Naive thymus-derived CD4-positive, alpha-beta T cell (primary cell): ENCODE measurements at regions of chr6 and their contacts with region 1.

Region 1: GRCh38 chr6:27871924-27872638 is 40.1 kb downstream of the OR2B2 start:
- DNase-seq: peak; percentile 68 to 97 (median 94)
- ATAC-seq: peak; percentile 88
- H3K4me3 ChIP-seq: peak overlapping the region; percentile 69
- H3K4me3 Mint-ChIP-seq: peak overlapping the region; percentile 83 to 99 (median 94)
- H3K27ac ChIP-seq: peak overlapping the region; percentile 84
- H3K27ac Mint-ChIP-seq: peak overlapping the region; percentile 95 to 98 (median 97)
- H3K4me1 ChIP-seq: peaks cover under 1 to 19% of the 10 kb centered on the region in 2 donors
- H3K4me1 Mint-ChIP-seq: peaks cover 15 to 69% (median 42%) of the 10 kb centered on the region in 7 donors
- H3K27me3 ChIP-seq: no peaks in the 10 kb centered on the region
- H3K27me3 Mint-ChIP-seq: peaks cover 0 to 8% (median 0%) of the 10 kb centered on the region in 5 donors

Region 2: DNA sequence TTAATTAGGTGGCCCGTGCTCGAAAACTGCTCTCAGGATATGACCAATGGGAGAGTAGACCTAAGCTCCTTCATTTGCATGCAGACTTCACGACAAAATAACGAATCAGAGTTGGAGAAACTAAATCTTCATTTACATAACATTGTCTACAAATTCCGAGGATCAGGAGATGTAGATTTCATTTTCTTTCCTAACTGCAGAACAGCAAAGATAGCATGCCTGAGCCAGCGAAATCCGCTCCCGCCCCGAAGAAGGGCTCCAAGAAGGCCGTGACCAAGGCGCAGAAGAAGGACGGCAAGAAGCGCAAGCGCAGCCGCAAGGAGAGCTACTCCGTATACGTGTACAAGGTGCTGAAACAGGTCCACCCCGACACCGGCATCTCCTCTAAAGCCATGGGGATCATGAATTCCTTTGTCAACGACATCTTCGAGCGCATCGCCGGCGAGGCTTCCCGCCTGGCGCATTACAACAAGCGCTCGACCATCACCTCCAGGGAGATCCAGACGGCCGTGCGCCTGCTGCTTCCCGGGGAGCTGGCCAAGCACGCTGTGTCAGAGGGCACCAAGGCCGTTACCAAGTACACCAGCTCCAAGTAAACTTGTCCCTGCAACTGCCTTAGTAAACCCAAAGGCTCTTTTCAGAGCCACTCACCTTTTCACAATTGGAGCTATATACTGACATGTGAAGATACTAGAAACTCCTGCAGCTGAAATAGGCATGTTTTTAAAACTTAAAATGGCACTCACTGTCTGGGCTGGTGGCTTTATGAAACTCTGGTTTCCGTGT is 1688.3 kb before region 1 on chr6:
- CTCF ChIA-PET with region 1: no interaction called
- POLR2A ChIA-PET with region 1: interaction called, 14 read pairs
- intact Hi-C with region 1: no loop called
- DNase-seq: peak; percentile 43 to 83 (median 77)
- ATAC-seq: peak; percentile 91
- H3K4me3 ChIP-seq: peak overlapping the region; percentile 82
- H3K4me3 Mint-ChIP-seq: peak overlapping the region; percentile 84 to 99 (median 98)
- H3K27ac ChIP-seq: peak overlapping the region; percentile 76
- H3K27ac Mint-ChIP-seq: peak overlapping the region; percentile 83 to 99 (median 90)
- H3K4me1 ChIP-seq: peaks cover 13 to 30% of the 10 kb centered on the region in 2 donors
- H3K4me1 Mint-ChIP-seq: peaks cover 19 to 59% (median 49%) of the 10 kb centered on the region in 7 donors
- H3K27me3 ChIP-seq: no peaks in the 10 kb centered on the region
- H3K27me3 Mint-ChIP-seq: no peaks in the 10 kb centered on the region

Region 3: DNA sequence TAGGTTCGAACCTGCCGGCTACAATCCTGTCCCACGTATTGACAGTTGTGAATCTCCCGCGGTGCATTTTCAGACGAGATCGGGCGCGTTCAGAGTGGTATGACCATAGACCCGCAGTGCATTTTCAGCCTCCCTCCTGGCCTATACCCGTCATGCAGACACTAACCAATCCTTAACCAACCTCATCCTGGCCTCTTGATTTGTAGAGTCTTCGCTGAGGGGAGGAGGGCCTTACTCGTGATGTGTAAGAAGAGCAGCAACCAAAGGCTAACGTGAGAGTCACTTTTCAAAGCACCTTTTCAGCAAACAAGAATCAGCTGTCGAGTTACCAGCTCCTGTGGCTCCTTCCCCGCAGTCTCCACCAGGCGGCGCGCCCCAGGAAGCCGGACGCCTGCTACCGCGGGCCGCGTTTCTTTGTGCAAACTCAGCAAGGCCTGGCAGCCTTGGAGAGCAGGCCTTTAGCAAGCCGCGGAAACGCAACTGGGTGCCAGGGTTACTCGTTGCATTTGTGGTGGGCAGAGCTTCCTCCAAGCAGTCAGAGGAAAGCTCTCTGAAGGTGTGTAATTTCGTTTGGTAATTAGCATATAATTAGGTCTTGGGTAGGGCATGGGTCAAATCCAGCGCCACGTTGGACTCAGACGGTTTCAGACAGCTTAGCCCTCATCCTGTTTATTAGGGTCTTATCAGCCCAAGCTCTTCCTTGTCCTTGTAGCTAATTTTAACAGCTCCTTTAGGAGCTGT is 99.7 kb before region 1 on chr6:
- CTCF ChIA-PET with region 1: interaction called, 21 read pairs
- POLR2A ChIA-PET with region 1: interaction called, 7 read pairs
- intact Hi-C with region 1: no loop called
- DNase-seq: peak; percentile 72 to 88 (median 82)
- ATAC-seq: peak; percentile 98
- H3K4me3 ChIP-seq: no peak overlapping the region
- H3K4me3 Mint-ChIP-seq: peak overlapping the region in 6 of 10 donors; percentile 14 to 59 (median 34)
- H3K27ac ChIP-seq: no peak overlapping the region
- H3K27ac Mint-ChIP-seq: peak overlapping the region in 2 of 9 donors; percentile 7 to 8
- H3K4me1 ChIP-seq: peaks cover 3 to 5% of the 10 kb centered on the region in 2 donors
- H3K4me1 Mint-ChIP-seq: peaks cover 6 to 20% (median 7%) of the 10 kb centered on the region in 7 donors
- H3K27me3 ChIP-seq: no peaks in the 10 kb centered on the region
- H3K27me3 Mint-ChIP-seq: peaks cover 1 to 35% (median 10%) of the 10 kb centered on the region in 5 donors

Region 4: DNA sequence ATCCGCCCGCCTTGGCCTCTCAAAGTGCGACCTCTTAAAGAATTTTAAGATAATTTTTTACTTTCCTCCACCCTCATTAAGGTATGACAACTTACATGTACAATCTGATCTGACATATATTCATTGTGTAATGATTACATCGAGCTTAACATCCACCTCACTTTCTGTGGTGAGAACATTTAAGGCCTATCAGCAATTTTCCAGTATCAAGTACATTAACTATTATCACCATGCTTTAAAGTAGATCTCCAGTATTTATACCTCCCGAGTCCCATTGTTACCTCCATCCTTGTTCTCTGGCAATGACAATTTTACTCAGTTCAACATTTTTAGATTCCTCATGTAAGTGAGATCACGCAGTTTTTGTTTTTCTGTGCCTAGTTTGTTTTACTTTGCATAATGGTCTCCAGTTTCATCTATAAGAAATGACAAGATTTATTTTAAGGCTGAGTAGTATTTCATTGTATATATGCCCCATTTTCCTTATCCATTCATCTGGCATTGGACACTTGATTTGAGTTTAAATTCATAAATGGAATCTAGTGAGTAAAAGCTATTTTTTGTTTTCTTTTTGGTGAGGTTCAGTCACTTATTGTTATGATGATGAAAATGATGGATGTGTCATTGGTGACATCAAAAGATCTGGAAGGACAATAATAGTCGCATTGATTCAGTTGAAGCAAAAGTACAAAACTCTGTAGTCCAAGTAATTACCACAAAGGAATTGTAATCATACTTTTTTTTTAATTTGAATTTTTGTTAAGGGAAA is 46.9 kb before region 1 on chr6:
- CTCF ChIA-PET with region 1: interaction called, 12 read pairs
- POLR2A ChIA-PET with region 1: interaction called, 1,351 read pairs
- intact Hi-C with region 1: loop called in 1 of 2 experiments (anchors 1 kb)
- DNase-seq: no peak
- ATAC-seq: no peak
- H3K4me3 ChIP-seq: peak overlapping the region; percentile 87
- H3K4me3 Mint-ChIP-seq: peak overlapping the region; percentile 82 to 99 (median 94)
- H3K27ac ChIP-seq: peak overlapping the region; percentile 89
- H3K27ac Mint-ChIP-seq: peak overlapping the region; percentile 90 to 100 (median 98)
- H3K4me1 ChIP-seq: peaks cover 6% of the 10 kb centered on the region in 2 donors
- H3K4me1 Mint-ChIP-seq: peaks cover 11 to 50% (median 33%) of the 10 kb centered on the region in 7 donors
- H3K27me3 ChIP-seq: no peaks in the 10 kb centered on the region
- H3K27me3 Mint-ChIP-seq: peaks cover 0 to 4% (median 0%) of the 10 kb centered on the region in 5 donors